K562 (cell line): ENCODE measurements at regions of chr11 and their contacts with region 1.

Region 1: DNA sequence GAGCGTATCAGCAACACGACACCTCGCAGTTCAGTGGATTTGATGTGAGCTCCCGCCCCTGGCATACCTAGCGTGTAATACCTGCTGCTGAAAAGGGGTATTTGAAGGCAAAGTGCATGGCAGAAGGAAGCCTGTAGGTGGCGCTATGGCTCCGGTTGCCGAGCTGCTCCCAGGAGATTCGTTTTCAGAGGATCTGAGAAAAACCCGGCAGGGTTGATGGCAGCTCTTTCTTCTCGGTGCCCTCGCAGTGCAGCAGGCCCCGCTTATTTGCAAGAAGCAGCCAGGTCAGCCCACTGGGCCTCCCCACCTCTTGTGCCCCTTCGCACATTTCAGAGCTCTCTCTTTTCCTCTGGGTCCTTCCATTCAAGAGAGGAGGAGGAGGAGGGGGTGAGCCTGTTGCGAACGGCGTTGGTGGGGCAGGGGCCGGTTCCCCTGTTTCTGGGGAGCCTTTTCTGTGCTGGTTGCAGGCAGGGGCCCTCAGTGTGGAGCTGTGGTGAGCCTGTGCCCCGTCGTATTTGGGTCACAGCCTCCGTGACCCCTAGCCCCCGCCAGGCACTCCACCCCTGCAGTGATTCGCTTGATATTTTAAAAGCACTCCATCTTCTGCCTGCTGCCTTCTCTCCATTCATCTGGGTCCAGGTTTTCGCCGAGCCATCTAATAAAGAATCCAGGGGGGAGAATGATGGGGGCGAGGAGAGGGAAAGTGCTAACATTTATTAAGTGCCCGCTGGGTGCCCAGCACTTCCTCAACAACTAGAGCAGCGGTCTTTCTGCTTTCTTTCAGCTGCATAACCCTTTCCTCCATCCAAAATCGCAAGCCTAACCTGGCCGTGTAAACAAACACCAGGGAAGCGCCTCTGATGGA is 85.3 kb upstream of the SYT13 start:
- DNase-seq: peak; percentile 68 to 79 (median 77)
- ATAC-seq: peak; percentile 94
- H3K4me3 ChIP-seq: no peak overlapping the region
- H3K27ac ChIP-seq: no peak overlapping the region
- H3K4me1 ChIP-seq: peaks cover 0 to 2% of the 10 kb centered on the region in 2 experiments; a peak in 1 of 5 replicates
- H3K27me3 ChIP-seq: peaks cover 14 to 40% of the 10 kb centered on the region in 2 experiments
- CTCF ChIP-seq: peak; percentile 85 to 94 (median 91)
- EP300 ChIP-seq: no peak
- POLR2A ChIP-seq: no peak
- RAD21 ChIP-seq: peak; percentile 68 to 79

Region 2: DNA sequence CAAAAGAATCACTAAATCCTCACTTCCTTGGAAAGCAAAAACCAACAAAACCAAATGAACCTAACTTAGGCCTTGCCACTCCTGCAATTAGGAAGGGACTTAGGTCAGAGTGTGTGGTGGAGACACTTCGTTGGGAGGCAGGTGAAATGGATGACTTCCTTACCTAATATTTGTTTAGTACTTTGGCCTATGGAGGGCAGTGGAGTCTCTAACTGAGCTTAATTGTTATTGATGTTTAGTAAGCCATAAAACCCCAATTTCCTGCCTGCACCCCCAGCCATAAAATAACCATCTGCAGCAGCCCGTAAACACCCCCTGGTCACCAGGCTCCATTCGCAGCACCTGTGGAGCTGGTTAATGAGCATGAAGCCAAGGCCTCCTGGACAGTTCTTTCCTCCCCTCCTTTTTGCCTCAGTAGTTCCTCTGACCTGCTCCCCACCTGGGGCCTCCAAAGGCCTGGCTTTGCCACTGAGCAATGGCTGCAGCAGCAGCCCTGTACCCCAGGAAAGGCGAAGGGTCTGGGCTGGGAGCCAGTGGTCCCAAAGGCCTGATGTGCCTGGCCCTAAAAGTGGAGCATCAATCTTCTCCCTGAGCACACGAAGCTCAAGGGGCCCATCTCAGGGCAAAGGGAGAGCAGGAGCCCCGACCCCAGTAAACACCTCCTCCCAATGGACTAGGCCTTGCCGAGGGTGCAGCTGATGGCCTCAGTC is 69.8 kb before region 1 on chr11:
- CTCF ChIA-PET with region 1: no interaction called
- POLR2A ChIA-PET with region 1: no interaction called
- in situ Hi-C with region 1: no loop called
- intact Hi-C with region 1: no loop called
- DNase-seq: no peak
- ATAC-seq: no peak
- H3K4me3 ChIP-seq: no peak overlapping the region
- H3K27ac ChIP-seq: no peak overlapping the region
- H3K4me1 ChIP-seq: no peaks in the 10 kb centered on the region
- H3K27me3 ChIP-seq: peaks cover 6 to 28% of the 10 kb centered on the region in 2 experiments; a peak in 4 of 5 replicates
- CTCF ChIP-seq: no peak
- EP300 ChIP-seq: no peak
- POLR2A ChIP-seq: no peak
- RAD21 ChIP-seq: no peak

Region 3: DNA sequence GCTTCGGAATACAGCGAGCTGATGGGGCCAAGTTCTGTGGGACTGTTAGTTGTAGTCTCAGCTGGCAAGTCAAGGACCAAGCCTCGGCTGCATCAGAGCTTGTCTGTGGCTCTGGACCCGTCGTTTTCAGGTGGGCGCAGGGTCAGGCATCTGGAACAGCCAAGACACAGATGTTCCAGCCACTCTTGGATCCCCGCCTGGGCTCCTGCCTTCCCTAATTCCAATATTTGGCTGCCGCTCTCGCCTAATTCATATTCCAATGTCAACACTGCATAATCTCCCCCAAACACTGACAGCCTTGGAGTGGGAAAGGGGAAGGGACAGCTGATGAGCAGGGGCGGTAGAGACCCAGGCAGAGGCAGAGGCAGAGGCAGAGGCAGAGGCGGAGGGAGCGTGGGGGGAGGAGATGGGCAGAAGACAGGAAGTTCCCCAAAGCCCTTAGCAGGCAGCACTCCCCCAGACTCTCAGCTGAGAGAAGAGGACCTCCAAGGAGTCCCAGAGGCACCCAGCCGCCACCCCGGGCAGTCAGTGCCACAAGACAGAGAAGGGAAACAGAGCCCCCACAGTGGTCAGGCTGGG is 383.9 kb after region 1 on chr11:
- CTCF ChIA-PET with region 1: no interaction called
- POLR2A ChIA-PET with region 1: no interaction called
- in situ Hi-C with region 1: no loop called
- intact Hi-C with region 1: loop called (anchors 5 kb)
- DNase-seq: no peak
- ATAC-seq: no peak
- H3K4me3 ChIP-seq: no peak overlapping the region
- H3K27ac ChIP-seq: no peak overlapping the region
- H3K4me1 ChIP-seq: peaks cover 0 to 8% of the 10 kb centered on the region in 2 experiments; a peak in 3 of 5 replicates
- H3K27me3 ChIP-seq: peaks cover 32 to 70% of the 10 kb centered on the region in 2 experiments
- CTCF ChIP-seq: no peak
- EP300 ChIP-seq: no peak
- POLR2A ChIP-seq: no peak
- RAD21 ChIP-seq: no peak